ENCODE measurements at regions of chr19 and their contacts with region 1.

Region 1: DNA sequence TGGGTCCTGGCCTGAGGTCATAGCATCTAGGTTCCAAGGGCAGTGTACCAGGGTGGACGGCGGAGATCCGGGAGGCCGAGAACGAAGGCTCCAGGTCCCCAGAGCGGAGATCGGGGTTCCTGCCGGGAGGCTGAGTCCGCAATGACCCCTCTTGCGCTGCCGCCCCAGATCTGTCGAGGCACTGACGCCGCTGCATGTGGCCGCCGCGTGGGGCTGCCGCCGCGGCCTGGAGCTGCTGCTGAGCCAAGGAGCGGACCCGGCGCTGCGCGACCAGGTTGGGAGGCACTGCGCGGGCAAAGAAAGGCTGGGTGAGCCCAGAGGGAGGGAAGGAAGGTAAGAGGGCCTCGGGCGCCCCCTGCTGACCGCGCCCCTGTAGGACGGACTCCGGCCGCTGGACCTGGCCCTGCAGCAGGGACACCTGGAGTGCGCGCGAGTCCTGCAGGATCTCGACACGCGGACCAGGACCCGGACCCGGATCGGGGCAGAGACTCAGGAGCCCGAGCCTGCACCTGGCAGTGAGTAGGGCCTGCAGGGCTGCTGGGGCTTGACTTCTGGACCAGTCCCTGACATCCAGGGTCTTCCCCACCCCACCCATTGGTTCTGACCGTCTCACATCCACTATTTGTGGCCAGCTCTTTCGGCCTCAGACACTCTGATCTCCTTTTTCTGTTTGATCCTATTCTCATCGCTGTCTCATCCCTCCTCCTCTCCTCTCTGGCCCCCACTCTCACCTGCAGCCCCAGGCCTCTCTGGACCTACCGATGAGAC is 971 bp downstream of the ANKLE1 start:
- DNase-seq: peak; percentile 87
- ATAC-seq: peak; percentile 93
- H3K4me3 Mint-ChIP-seq: peak overlapping the region; percentile 88
- H3K27ac Mint-ChIP-seq: peak overlapping the region; percentile 79
- H3K4me1 Mint-ChIP-seq: peaks cover 20% of the 10 kb centered on the region
- H3K27me3 Mint-ChIP-seq: no peaks in the 10 kb centered on the region

Region 2: DNA sequence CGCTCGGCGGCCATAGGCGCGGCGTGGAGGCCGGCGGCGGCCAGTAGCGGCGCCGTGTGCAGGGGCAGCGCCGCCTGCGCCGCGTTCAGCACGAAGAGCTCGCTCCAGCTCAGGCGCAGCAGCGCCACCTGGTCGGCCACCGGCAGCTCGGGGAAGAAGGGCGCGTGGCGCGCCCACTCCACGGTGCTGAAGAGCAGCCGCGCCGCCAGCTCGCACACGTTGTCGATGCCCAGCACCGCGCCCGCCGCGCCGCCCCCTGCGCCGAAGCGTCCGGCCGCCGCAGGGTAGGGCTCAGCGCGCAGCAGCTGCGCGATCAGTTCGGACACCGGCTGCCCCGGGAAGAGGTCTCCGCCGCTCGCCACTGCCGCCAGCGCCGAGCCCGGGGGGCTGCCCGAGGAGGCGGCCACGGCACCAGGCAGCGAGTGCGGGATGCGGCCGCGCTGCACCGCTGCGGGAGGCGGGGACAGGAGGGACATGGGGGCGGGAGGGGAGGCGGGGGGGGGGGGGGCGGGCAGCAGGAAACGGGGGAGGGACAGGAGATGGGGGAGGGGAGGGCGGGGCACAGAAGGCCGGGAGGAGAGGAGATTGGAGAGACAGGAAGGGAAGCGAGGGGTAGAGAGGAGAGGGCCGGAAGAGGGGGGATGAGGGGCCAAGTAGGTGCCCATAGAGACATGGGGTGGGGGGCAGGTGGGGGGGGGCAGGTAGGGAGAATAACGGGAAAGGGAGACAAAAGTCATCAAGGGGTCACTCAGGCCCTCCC is 46.9 kb before region 1 on chr19:
- CTCF ChIA-PET with region 1: interaction called, 16 read pairs
- POLR2A ChIA-PET with region 1: interaction called, 4 read pairs
- DNase-seq: peak; percentile 82
- ATAC-seq: peak; percentile 96
- H3K4me3 Mint-ChIP-seq: peak overlapping the region; percentile 81
- H3K27ac Mint-ChIP-seq: no peak overlapping the region
- H3K4me1 Mint-ChIP-seq: peaks cover 12% of the 10 kb centered on the region
- H3K27me3 Mint-ChIP-seq: no peaks in the 10 kb centered on the region

Region 3: GRCh38 chr19:17266975-17267788 is 15.5 kb before region 1 on chr19 and contains the start of gene BABAM1:
- CTCF ChIA-PET with region 1: interaction called, 109 read pairs
- POLR2A ChIA-PET with region 1: interaction called, 15 read pairs
- DNase-seq: peak; percentile 99
- ATAC-seq: peak; percentile 94
- H3K4me3 Mint-ChIP-seq: peak within 1 kb of the TSS; percentile 90
- H3K27ac Mint-ChIP-seq: peak within 1 kb of the TSS; percentile 88
- H3K4me1 Mint-ChIP-seq: peaks cover 31% of the 10 kb centered on the region
- H3K27me3 Mint-ChIP-seq: no peaks in the 10 kb centered on the region
- total RNA-seq, gene BABAM1: 116 to 117 TPM

Measured in activated CD8-positive, alpha-beta T cell treated with anti-CD3 and anti-CD28 coated beads, Interleukin-2, amount 10 ng/mL, durations not matched to agents 7 days and 5 days (primary cell).